ENCODE measurements at regions of chr9 and their contacts with region 1.

Region 1: GRCh38 chr9:107172160-107172978 is 110.7 kb upstream of the RAD23B start:
- DNase-seq: peak; percentile 64
- H3K4me3 ChIP-seq: no peak overlapping the region
- H3K27ac ChIP-seq: no peak overlapping the region
- H3K4me1 ChIP-seq: no peaks in the 10 kb centered on the region
- H3K27me3 ChIP-seq: no peaks in the 10 kb centered on the region
- CTCF ChIP-seq: peak; percentile 91 to 95

Region 2: DNA sequence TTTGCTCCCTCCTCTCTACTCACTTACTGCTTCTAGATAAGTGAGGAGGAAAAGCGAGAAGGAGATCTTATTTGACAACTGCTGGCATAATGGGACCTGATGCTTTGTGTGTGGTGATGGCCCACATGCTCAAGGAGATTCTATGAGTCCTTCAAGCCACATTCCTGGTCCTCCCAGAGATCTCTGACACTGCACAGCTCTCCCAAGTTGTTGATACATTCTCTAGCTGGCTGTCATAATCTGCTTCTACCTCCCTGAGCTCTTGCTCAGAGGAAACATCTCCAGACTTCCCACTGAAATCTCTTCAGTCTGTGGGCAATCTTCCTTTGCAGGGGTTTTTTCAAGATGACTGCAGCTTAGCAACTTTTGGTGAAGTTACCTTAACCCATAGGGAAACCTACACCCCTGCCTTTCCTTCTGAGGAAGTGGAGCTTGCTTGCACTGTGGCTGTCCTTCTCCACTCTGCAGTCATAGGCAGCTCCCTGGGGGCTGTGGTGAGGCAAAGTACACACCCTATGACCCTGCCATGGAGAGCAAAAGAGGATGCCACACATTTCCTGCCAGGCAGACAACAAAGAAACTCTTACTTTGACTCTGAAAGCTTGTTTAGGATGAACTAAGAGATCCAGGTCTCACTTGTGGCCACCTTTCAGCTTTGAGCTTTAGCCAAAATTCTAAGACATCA is 1314.2 kb before region 1 on chr9:
- CTCF ChIA-PET with region 1: no interaction called
- dilution Hi-C with region 1: no loop called
- in situ Hi-C with region 1: loop called in 1 of 2 experiments (anchors 25 kb)
- intact Hi-C with region 1: no loop called
- DNase-seq: no peak
- H3K4me3 ChIP-seq: no peak overlapping the region
- H3K27ac ChIP-seq: no peak overlapping the region
- H3K4me1 ChIP-seq: no peaks in the 10 kb centered on the region
- H3K27me3 ChIP-seq: no peaks in the 10 kb centered on the region
- CTCF ChIP-seq: no peak

Region 3: GRCh38 chr9:106286249-106286648 is 886.1 kb before region 1 on chr9:
- CTCF ChIA-PET with region 1: no interaction called
- dilution Hi-C with region 1: no loop called
- in situ Hi-C with region 1: no loop called
- intact Hi-C with region 1: loop called (anchors 10 kb)
- DNase-seq: peak; percentile 27
- H3K4me3 ChIP-seq: no peak overlapping the region
- H3K27ac ChIP-seq: no peak overlapping the region
- H3K4me1 ChIP-seq: peaks cover 11% of the 10 kb centered on the region
- H3K27me3 ChIP-seq: no peaks in the 10 kb centered on the region
- CTCF ChIP-seq: peak; percentile 26 to 38

Region 4: GRCh38 chr9:106438928-106439327 is 733.4 kb before region 1 on chr9:
- CTCF ChIA-PET with region 1: no interaction called
- dilution Hi-C with region 1: no loop called
- in situ Hi-C with region 1: loop called in 1 of 2 experiments (anchors 25 kb)
- intact Hi-C with region 1: no loop called
- DNase-seq: no peak
- H3K4me3 ChIP-seq: no peak overlapping the region
- H3K27ac ChIP-seq: no peak overlapping the region
- H3K4me1 ChIP-seq: no peaks in the 10 kb centered on the region
- H3K27me3 ChIP-seq: no peaks in the 10 kb centered on the region
- CTCF ChIP-seq: no peak

Region 5: DNA sequence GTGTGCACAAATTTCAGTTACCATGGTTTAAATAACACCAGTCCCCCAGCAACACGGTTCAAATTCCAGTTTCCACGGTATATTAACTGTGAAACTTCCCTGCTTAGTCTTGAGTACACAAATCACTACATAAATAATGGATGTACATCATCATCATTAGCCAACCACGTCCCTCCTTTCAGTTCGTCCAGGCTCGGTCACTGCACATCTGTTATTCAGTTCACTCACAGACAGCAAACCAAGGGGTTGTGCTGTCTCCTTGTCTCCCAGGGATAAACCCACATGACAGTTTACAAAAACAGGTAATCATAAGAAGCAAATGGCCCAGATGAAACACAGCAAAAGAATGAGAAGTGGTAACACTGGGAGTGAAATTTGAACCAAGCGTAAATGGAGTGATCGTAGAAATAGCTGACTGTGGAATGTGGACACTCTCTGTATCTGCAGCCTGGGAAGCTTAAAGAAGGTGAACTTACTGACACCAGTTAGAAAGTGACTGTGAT is 49.7 kb after region 1 on chr9:
- CTCF ChIA-PET with region 1: no interaction called
- dilution Hi-C with region 1: loop called (anchors 5 kb)
- in situ Hi-C with region 1: no loop called
- intact Hi-C with region 1: no loop called
- DNase-seq: no peak
- H3K4me3 ChIP-seq: no peak overlapping the region
- H3K27ac ChIP-seq: no peak overlapping the region
- H3K4me1 ChIP-seq: no peaks in the 10 kb centered on the region
- H3K27me3 ChIP-seq: no peaks in the 10 kb centered on the region
- CTCF ChIP-seq: no peak

Region 6: DNA sequence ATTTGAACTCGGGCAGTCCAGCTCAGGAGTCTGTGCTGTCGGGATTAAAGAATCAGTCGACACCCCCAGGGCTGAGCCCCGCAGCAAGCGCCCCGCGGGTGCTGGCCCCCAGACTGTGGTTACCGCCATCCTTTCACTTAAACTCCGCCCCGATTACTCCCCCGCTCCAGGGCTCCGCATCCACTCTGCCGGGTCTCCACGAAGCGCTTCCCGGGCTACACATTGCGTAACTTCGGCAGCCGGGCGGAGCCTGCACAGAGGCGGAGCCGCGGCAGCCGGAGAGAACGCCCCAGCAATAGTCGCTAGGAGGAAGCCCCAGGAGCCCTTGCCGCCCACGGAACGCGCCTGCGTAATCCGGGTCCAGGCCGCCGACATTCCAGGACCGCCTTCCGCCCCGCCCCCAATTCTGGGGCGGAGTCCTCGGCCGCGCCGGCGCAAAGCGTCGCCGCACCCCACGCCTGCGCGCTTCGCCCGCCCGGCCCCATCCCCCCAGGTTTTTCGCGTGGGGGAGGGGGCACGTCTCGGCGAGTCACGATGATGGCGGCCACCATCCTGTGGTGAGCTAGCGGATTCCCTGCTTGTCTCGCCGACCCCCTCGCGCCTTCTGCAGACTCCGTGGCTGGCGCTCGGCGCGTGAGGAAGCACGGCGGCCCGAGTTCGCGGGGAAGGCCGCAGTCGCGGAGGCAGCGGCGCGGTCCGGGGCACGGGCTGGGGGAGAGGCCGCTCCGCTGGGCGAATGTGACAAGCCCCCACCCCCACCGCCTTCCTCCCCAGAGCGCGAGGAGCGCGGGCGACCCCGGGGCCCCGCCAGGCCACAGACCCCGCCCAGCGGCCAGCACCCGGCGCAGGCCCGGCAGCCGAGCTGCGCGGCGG is 110.6 kb after region 1 on chr9 and contains the start of gene RAD23B:
- CTCF ChIA-PET with region 1: no interaction called
- dilution Hi-C with region 1: no loop called
- in situ Hi-C with region 1: no loop called
- intact Hi-C with region 1: loop called (anchors 1 kb)
- DNase-seq: peak; percentile 99
- H3K4me3 ChIP-seq: peak within 1 kb of the TSS; percentile 91 to 93 (median 92)
- H3K27ac ChIP-seq: peak within 1 kb of the TSS; percentile 83
- H3K4me1 ChIP-seq: peaks cover 28% of the 10 kb centered on the region
- H3K27me3 ChIP-seq: no peaks in the 10 kb centered on the region
- CTCF ChIP-seq: no peak
- total RNA-seq, gene RAD23B: 126 to 177 TPM